Activated T-helper 1 cell treated with anti-CD3 and anti-CD28 coated beads, Interleukin-12 subunit alpha, Interleukin-12 subunit beta, Interleukin-2, Interleukin-4 antibody, amounts not matched to agents 30 ng/mL and 10 ng/mL and 1 ng/mL, durations not matched to agents 14 hours and 24 hours and 36 hours (primary cell): ENCODE measurements at regions of chr15 and their contacts with region 1.

Region 1: DNA sequence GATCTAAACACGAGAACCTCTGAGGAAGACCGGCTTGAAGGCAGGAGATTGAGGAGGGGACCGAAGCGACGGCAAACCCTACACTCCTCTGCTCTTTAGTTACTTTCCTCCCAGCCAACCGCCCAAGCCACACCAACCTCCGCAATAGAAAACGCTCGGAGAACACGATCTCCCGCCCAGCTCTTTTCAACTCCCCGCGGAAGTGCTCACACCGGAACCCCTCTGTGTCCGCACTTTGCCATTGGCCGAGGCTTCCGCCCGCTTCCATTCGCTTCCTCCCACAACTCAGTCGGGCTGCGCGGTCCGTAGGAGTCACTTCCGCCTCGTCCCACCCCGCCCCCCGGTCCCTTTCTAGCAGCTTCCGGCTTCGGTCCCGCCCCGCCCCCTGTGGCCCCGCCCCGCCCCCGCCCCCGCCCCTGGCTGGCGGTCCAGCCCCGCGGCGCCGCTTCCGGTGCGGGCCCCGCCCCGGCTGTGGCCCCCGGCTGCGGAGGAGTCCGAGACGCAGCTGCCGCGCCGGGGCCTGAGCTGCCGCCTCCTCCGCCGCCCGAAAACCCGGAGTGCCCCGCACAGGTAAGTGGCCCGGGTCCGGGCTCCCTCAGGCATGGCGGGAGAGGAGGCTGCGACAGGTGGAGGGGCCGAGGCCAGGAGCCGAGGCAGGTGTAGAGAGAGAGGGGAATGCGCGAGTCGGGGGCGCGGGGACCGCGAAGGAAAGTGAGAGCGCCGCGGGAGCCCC is at the start of gene ARID3B:
- DNase-seq: peak; percentile 91
- H3K4me3 Mint-ChIP-seq: peak within 1 kb of the TSS; percentile 94
- H3K27ac Mint-ChIP-seq: peak within 1 kb of the TSS; percentile 96
- H3K4me1 Mint-ChIP-seq: peaks cover 56% of the 10 kb centered on the region
- H3K27me3 Mint-ChIP-seq: no peaks in the 10 kb centered on the region
- total RNA-seq, gene ARID3B: 48.8 and 53.6 TPM in 2 replicates

Region 2: DNA sequence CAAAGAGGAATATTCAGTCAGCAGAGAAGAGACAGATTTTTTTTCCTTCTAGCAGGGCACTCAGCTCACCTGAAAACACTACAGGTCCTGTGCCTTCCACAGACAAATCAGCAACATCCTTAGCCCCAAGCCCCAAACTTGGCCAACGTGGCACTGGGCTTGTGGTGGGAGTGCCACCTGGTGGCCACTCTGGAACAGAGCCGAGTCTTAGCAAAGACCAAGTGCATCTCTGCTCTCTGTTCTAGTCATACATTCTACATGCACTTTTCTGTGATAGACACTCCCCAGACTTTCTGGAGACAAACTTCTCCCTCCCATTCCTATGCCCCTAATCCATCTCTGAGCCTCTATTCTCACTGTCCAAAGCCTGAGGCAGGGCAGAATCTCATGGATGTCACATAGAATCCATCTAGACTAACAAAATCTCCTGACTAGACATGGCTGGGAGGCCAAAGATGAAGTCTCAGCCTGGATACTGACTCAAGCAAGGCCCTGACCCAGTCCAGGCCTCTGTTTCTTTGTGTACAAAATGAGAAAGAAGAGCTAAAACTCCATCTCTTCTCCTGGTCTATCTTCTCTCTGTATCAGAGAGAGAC is 102.1 kb before region 1 on chr15:
- intact Hi-C with region 1: loop called (anchors 1 kb)
- DNase-seq: peak; percentile 73
- H3K4me3 Mint-ChIP-seq: no peak overlapping the region
- H3K27ac Mint-ChIP-seq: peak overlapping the region; percentile 1
- H3K4me1 Mint-ChIP-seq: peaks cover 58% of the 10 kb centered on the region
- H3K27me3 Mint-ChIP-seq: no peaks in the 10 kb centered on the region

Region 3: DNA sequence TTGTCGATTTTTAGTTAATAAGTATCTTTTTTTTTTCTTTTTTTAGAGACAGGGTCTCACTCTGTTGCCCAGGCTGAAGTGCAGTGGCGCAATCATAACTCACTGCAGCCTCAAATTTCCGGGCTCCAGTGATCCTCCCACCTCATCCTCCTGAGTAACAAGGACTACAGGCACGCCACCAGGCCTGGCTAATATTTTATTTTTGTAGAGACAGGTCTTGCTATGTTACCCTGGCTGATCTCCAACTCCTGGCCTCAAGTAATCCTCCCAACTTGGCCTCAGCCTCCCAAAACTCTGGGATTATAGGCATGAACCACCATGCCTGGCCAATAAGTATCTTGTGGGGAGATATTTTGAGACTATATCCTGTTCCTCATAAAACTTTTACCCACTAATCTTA is 29.3 kb before region 1 on chr15:
- intact Hi-C with region 1: loop called (anchors 2 kb)
- DNase-seq: no peak
- H3K4me3 Mint-ChIP-seq: no peak overlapping the region
- H3K27ac Mint-ChIP-seq: no peak overlapping the region
- H3K4me1 Mint-ChIP-seq: peaks cover 15% of the 10 kb centered on the region
- H3K27me3 Mint-ChIP-seq: no peaks in the 10 kb centered on the region

Region 4: GRCh38 chr15:74615508-74616365 is 74.8 kb after region 1 on chr15 and contains the start of gene CLK3:
- intact Hi-C with region 1: loop called (anchors 1 kb)
- DNase-seq: peak; percentile 94
- H3K4me3 Mint-ChIP-seq: peak within 1 kb of the TSS; percentile 93
- H3K27ac Mint-ChIP-seq: peak within 1 kb of the TSS; percentile 95
- H3K4me1 Mint-ChIP-seq: peaks cover 33% of the 10 kb centered on the region
- H3K27me3 Mint-ChIP-seq: peaks cover 5% of the 10 kb centered on the region
- total RNA-seq, gene CLK3: 103 and 107 TPM in 2 replicates

Region 5: GRCh38 chr15:74653426-74654123 is 112.6 kb after region 1 on chr15:
- intact Hi-C with region 1: no loop called
- DNase-seq: no peak
- H3K4me3 Mint-ChIP-seq: no peak overlapping the region
- H3K27ac Mint-ChIP-seq: peak overlapping the region; percentile 40
- H3K4me1 Mint-ChIP-seq: peaks cover 34% of the 10 kb centered on the region
- H3K27me3 Mint-ChIP-seq: no peaks in the 10 kb centered on the region

Region 6: DNA sequence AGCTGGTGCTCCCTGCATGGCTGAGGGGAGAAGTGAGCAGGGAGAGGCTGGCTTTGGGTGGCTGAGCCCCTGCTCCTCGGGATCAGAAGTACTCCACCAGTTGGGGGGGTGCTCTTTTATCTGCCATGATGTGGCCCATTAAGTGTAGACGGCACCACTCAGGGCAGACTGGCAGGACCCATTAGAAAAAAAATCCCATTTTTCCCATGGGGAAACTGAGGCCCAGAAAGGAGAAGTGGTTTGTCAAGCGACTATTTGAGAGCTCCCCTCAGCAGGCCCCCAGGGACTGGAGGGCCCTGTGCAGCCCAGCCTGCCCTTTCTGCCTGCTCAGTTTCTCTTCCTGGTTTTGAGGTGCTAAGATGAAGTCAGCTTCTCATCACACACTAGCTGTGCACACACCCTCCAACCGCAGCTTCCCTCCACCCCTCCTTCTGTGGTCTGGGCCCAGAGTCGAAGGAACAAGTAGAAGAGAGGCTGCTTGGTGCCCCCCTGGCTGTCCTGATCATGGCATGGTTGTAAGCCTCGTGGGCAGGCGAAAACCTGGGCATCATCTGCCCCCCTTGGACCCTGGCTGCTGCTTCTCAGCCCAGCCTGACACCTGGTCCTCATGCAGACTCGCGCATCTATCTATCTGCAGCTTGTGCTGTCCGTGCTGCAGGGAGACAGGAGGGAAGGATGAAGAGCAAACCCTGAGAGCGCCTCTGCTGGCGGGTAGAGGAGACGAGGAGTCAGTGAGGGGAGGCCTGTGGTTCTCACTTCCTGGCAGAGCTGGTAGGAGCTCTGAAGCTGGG is 246.5 kb after region 1 on chr15:
- intact Hi-C with region 1: loop called (anchors 2 kb)
- DNase-seq: peak; percentile 89
- H3K4me3 Mint-ChIP-seq: peak overlapping the region; percentile 86
- H3K27ac Mint-ChIP-seq: peak overlapping the region; percentile 98
- H3K4me1 Mint-ChIP-seq: peaks cover 65% of the 10 kb centered on the region
- H3K27me3 Mint-ChIP-seq: no peaks in the 10 kb centered on the region